SK-N-SH (cell line): ENCODE measurements at regions of chr6 and their contacts with region 1.

Region 1: GRCh38 chr6:34223956-34224940 is 12.4 kb upstream of the HMGA1 start:
- DNase-seq: peak; percentile 99
- H3K4me3 ChIP-seq: peak overlapping the region; percentile 50 to 66
- H3K27ac ChIP-seq: peak overlapping the region; percentile 76 to 88
- H3K4me1 ChIP-seq: peaks cover 10% of the 10 kb centered on the region in 2 experiments; a peak in 3 of 4 replicates
- H3K27me3 ChIP-seq: no peaks in the 10 kb centered on the region
- CTCF ChIP-seq: no peak
- EP300 ChIP-seq: peak in 1 of 2 experiments; percentile 73; a peak in 1 of 4 replicates
- RAD21 ChIP-seq: no peak

Region 2: DNA sequence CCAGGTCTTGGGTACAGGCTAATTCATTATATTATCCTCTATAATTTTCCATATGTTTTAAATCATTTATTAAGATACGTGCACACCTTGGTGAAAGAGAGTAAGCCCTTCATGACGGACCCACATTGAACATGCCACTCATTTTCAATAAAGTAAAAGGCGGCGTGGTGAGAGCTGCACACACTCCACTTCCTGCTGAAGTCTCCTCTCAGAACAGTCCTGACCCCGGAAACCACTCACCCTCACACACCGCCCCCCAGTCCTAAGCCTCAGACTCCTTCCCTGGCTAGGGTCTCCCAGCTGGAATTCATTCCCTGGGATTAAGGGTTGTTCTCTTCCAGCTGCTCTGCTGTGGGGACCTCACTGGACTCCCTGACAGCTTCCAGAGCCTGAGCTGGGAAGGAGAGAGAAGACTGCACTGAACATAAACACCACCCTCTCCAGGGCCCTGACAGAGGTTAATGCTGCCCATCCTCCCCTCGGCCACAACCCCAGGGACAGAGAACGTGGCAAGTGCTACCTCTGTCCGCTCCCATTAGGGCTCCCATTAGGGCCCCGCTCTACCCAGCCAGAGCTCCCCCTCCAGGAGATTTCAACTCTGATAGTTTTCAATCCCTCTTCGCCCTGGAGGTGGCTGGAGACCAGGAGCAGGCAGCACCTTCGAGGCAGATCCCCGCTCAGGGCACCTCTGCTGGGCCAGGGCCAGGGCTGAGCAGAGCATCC is 103.1 kb before region 1 on chr6:
- CTCF ChIA-PET with region 1: no interaction called
- POLR2A ChIA-PET with region 1: no interaction called
- DNase-seq: peak; percentile 74
- H3K4me3 ChIP-seq: no peak overlapping the region
- H3K27ac ChIP-seq: no peak overlapping the region
- H3K4me1 ChIP-seq: peaks cover 0 to 8% of the 10 kb centered on the region in 2 experiments; a peak in 1 of 4 replicates
- H3K27me3 ChIP-seq: peaks cover 12% of the 10 kb centered on the region; the same call in 1 of the 2 replicates
- CTCF ChIP-seq: no peak
- EP300 ChIP-seq: no peak
- RAD21 ChIP-seq: no peak

Region 3: DNA sequence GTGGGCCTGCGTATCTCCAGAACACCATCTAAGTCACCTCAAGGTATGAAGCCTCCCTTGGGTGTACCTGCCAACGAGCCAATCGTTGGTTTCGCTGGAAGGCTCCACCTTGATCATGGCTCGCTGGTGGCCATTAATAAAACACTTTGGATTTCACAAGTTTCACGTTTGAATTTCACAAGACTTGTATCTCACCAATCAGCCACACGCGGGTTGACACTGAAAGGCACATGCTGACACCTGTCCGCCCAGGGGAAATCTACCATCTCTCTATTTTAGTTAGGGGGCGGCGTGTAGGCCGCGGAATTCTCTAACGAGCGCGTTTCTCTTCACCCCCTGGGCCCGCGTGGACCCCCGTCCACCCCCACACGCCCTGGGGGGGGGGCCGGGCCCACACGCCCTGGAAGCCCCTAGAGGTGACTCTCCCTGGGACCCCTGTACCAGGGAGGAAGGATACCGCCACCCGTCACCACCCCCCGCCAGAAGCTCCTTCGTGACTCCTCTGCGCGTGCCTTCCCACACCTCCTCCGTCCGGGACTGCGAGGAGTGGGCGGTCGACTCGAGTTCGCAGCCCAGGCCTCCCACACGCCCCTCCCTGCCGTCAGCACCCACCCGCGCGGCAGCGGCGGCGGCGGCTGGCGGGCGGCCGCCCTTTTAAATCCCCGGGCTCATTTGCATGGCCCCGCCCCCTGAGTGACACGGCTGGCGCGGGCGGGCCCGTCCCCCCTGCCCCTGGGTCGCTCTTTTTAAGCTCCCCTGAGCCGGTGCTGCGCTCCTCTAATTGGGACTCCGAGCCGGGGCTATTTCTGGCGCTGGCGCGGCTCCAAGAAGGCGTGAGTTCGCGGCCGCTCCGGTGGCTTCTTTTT is 12.1 kb after region 1 on chr6 and contains the start of gene HMGA1:
- CTCF ChIA-PET with region 1: interaction called, 8 read pairs
- POLR2A ChIA-PET with region 1: interaction called, 15 read pairs
- DNase-seq: peak; percentile 99
- H3K4me3 ChIP-seq: peak within 1 kb of the TSS; percentile 80 to 82
- H3K27ac ChIP-seq: peak within 1 kb of the TSS; percentile 72 to 85
- H3K4me1 ChIP-seq: peaks cover 9 to 19% of the 10 kb centered on the region in 2 experiments
- H3K27me3 ChIP-seq: no peaks in the 10 kb centered on the region
- CTCF ChIP-seq: no peak
- EP300 ChIP-seq: no peak
- RAD21 ChIP-seq: no peak
- polyA plus RNA-seq, gene HMGA1: 185 and 433 TPM in 2 replicates